Sciatic nerve (tissue), 2 donors: ENCODE measurements at regions of chrX and their contacts with region 1.

Region 1: DNA sequence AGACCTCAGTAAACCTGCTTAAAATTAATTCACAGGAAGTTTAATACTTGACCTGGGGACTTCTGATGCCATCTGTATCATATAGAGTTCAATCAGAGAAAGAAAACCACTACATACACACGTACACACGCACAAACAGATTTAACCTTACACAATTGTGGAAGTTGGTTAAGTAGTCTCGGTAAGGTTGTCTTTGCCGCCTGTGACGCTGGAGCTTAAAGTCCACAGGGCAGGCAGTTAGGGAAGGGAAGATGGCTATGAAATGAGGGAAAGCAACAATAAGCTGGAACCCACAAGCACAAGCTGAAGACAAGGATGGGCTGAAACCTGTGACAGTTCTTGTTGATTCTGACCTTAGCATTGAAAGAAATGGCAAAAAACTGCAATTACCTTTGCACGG is 41.7 kb upstream of the TSPAN7 start:
- DNase-seq: no peak
- ATAC-seq: no peak

Region 2: DNA sequence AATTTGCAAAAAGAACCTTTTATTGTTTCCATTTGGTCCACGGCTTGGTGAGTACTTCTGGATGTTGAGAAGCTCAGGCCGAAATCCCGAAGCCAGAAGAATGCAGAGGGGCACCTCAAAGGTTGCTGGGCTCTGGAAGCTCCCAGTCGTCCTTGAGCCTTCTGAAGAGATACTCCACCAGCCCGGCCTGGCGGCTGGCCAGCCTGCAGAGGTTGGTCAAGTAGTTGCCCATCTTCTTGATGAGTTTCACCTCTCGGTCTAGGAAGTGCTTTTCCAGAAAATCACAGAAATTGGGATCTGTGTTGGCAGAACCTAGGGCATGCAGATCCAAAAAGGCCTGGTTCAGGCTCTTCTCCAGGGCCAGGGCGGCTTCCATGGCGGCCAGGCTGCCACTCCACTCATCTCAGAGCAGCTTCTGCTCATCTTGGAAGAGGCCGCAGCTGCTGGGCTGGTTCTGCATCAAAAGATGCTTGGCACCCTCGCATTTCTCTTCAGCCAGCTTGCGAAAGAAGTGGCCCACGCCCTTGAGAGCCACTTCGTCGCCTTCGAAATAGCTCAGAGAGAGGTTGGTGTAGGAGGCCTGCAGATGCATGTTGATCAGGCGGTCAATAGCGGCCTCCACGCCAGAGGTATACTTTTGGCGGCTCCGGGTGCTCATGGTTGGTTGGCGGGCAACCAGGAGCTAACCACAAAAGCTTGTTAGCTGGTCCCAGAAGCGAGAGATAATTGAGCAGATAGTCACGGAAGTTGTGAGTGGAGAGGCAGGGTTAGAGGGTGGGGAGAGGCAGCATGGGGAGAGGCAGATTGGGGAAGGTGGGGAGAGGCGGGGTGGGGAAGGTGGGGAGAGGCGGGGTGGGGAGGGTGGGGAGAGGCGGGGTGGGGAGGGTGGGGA is 34.8 kb before region 1 on chrX:
- intact Hi-C with region 1: loop called (anchors 2 kb)
- DNase-seq: no peak
- ATAC-seq: no peak